ENCODE measurements at regions of chr16 and their contacts with region 1.

Region 1: DNA sequence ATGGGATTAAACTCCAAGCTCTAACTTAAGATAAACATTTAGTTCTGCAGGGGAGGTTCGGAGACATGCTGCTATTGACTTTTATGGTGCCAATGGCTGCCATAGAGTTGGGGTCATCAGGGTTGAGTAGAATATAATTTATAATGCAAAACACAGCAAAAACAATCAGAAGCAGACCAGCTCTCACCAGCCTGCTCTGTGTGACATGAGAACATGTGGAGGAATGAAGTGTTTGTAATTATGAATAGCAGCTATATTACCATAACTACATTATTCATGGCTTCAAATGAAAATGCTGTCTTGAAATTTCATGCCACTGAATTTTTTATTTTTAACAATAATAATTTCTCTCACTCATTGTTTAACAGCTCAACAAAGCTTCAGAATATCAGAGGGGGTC is 645.6 kb upstream of the CDH8 start:
- DNase-seq: no peak
- ATAC-seq: no peak
- H3K4me3 ChIP-seq: no peak overlapping the region
- H3K27ac ChIP-seq: no peak overlapping the region
- H3K4me1 ChIP-seq: no peaks in the 10 kb centered on the region
- H3K27me3 ChIP-seq: no peaks in the 10 kb centered on the region
- CTCF ChIP-seq: no peak

Region 2: GRCh38 chr16:62625326-62625725 is 56.5 kb before region 1 on chr16:
- intact Hi-C with region 1: loop called in 1 of 10 experiments (anchors 10 kb)
- DNase-seq: no peak
- ATAC-seq: no peak
- H3K4me3 ChIP-seq: no peak overlapping the region
- H3K27ac ChIP-seq: no peak overlapping the region
- H3K4me1 ChIP-seq: peaks cover 0 to 5% (median 0%) of the 10 kb centered on the region in 9 donors
- H3K27me3 ChIP-seq: no peaks in the 10 kb centered on the region
- CTCF ChIP-seq: no peak

Region 3: GRCh38 chr16:62967163-62967562 is 285.3 kb after region 1 on chr16:
- intact Hi-C with region 1: no loop called
- DNase-seq: no peak
- ATAC-seq: no peak
- H3K4me3 ChIP-seq: no peak overlapping the region
- H3K27ac ChIP-seq: no peak overlapping the region
- H3K4me1 ChIP-seq: no peaks in the 10 kb centered on the region
- H3K27me3 ChIP-seq: no peaks in the 10 kb centered on the region
- CTCF ChIP-seq: no peak

Measured in heart right ventricle (tissue), 16 donors.